ENCODE measurements at regions of chr12 and their contacts with region 1.

Region 1: DNA sequence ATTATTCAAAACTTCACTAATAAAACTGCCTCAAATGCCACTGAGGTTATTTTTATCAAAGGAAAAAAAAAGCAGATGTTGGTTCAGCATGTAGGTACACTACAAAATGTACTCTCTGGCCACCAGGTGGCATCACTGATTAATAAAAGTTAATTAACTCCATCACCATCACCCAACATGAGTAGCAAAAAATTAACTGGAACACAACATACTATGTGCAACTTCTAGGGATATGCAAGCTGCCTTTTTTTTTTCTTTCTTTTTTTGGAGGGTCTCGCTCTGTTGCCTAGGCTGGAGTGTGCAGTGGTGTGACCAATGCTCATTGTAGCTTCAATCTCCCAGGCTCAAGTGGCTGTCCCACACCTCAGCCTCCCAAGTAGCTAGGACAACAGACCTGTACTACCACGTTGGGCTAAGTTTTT is 43.8 kb upstream of the NR2C1 start:
- DNase-seq: peak; percentile 86
- H3K4me3 Mint-ChIP-seq: peak overlapping the region; percentile 38
- H3K27ac Mint-ChIP-seq: peak overlapping the region; percentile 78
- H3K4me1 Mint-ChIP-seq: peaks cover 28% of the 10 kb centered on the region
- H3K27me3 Mint-ChIP-seq: no peaks in the 10 kb centered on the region
- CTCF ChIP-seq: peak; percentile 48

Region 2: DNA sequence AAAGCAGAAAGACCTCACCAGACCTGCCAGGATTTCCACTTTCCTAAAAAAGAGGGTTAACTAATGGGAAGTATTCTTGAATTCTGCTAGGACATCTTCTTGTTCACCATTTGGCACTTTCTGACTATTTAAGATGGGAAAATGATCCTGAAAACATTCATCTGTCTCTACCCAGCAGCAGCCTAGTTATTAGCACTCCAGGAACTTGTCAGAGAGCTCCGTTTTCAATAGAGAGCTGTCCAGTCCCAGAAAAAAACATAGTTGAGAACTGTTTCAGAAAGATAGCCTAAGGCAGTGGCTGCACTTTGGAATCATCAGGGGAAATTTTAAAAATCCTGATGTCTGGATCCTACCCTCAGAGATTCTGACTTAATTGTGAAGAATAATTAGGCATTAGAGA is 635.5 kb before region 1 on chr12:
- CTCF ChIA-PET with region 1: no interaction called
- POLR2A ChIA-PET with region 1: no interaction called
- intact Hi-C with region 1: no loop called
- DNase-seq: no peak
- H3K4me3 Mint-ChIP-seq: no peak overlapping the region
- H3K27ac Mint-ChIP-seq: no peak overlapping the region
- H3K4me1 Mint-ChIP-seq: no peaks in the 10 kb centered on the region
- H3K27me3 Mint-ChIP-seq: no peaks in the 10 kb centered on the region
- CTCF ChIP-seq: no peak

Region 3: GRCh38 chr12:94676031-94676641 is 441.1 kb before region 1 on chr12:
- CTCF ChIA-PET with region 1: no interaction called
- POLR2A ChIA-PET with region 1: no interaction called
- intact Hi-C with region 1: no loop called
- DNase-seq: no peak
- H3K4me3 Mint-ChIP-seq: no peak overlapping the region
- H3K27ac Mint-ChIP-seq: no peak overlapping the region
- H3K4me1 Mint-ChIP-seq: no peaks in the 10 kb centered on the region
- H3K27me3 Mint-ChIP-seq: peaks cover 7% of the 10 kb centered on the region
- CTCF ChIP-seq: no peak

Region 4: DNA sequence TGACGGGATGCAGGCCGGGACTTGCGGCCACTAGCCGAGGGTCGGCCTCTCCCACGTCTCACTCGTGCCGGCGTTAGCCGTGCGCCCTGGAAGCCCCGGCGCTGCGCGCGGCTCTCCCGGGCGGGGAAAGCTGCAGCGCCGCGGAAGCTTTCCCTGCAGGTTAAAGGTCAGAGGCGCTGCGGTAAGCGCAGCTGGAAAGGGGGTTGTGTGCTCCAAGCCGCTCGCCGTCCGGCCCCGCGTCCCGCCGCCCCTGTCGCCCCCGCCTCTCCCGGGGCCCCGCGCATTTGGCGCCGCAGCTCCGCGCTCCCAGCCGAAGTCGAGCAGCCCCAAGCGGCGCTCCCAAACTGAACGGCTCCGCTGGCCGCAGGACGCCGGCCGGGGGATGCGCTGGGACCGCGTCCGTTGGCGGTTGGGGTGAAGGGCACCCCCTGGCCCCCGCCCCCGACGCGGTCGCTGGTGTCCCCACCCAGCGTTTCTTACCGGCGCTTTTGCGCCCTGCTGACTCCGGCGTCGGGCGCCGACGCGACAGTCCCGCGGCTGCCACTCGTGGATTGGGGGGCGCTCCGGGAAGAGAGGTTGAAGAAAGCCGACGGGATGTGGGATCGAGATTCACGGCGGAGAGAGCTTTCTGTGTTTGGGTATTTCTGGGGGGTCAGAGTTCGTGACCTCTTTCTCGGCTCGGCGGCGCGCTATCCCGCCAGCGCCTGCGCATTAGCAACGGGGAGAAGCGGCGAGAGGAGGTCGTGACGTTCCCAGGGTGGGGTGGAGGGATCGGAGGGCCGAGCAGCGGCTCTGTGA is 44.1 kb before region 1 on chr12 and contains the start of gene NR2C1:
- CTCF ChIA-PET with region 1: interaction called, 3 read pairs
- POLR2A ChIA-PET with region 1: interaction called, 10 read pairs
- intact Hi-C with region 1: no loop called
- DNase-seq: peak; percentile 92
- H3K4me3 Mint-ChIP-seq: peak within 1 kb of the TSS; percentile 88
- H3K27ac Mint-ChIP-seq: peak within 1 kb of the TSS; percentile 59
- H3K4me1 Mint-ChIP-seq: peaks cover 4% of the 10 kb centered on the region
- H3K27me3 Mint-ChIP-seq: no peaks in the 10 kb centered on the region
- CTCF ChIP-seq: no peak
- total RNA-seq, gene NR2C1: 29.0 and 35.2 TPM in 2 replicates

Region 5: GRCh38 chr12:95131585-95132340 is 14.6 kb after region 1 on chr12:
- CTCF ChIA-PET with region 1: interaction called, 11 read pairs
- POLR2A ChIA-PET with region 1: interaction called, 3 read pairs
- intact Hi-C with region 1: no loop called
- DNase-seq: no peak
- H3K4me3 Mint-ChIP-seq: no peak overlapping the region
- H3K27ac Mint-ChIP-seq: no peak overlapping the region
- H3K4me1 Mint-ChIP-seq: no peaks in the 10 kb centered on the region
- H3K27me3 Mint-ChIP-seq: no peaks in the 10 kb centered on the region
- CTCF ChIP-seq: no peak

Region 6: DNA sequence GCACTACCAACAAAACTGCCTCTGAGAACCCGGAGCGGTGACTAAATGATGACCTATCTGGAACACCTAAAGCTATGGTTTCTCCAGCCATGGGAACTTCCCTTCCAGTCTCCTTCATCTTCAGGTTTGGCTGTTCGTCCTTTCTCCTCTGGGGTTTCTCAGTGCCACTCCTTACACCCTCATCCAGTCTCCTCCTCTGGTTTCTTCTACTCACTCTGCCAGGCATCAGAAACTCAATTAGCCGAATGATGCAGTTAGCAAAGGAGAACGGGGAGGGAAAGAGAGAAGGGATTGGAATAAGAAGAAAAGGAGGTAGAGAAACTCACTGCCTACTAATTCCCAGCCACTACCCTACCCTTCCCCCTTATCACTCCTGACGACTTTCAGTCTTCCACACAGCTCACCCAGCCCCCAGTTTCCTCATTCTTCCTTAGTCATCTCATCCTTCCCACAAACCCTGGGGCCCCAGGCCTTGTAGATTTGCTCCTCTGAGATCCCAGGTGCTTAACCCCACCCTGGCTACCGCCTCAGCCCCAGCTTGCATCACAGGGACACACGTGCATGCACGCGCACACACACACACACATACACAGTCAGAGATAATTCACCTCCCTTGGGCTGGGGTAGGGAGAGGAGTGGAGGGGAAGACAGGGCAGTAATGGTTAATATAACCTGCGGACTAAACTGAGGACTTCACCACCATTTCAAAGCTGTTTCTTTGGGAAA is 87.1 kb after region 1 on chr12:
- CTCF ChIA-PET with region 1: interaction called, 8 read pairs
- POLR2A ChIA-PET with region 1: interaction called, 44 read pairs
- intact Hi-C with region 1: loop called (anchors 5 kb)
- DNase-seq: peak; percentile 100
- H3K4me3 Mint-ChIP-seq: peak overlapping the region; percentile 77
- H3K27ac Mint-ChIP-seq: peak overlapping the region; percentile 98
- H3K4me1 Mint-ChIP-seq: peaks cover 45% of the 10 kb centered on the region
- H3K27me3 Mint-ChIP-seq: no peaks in the 10 kb centered on the region
- CTCF ChIP-seq: no peak

Region 7: GRCh38 chr12:95318071-95318545 is 200.9 kb after region 1 on chr12:
- CTCF ChIA-PET with region 1: no interaction called
- POLR2A ChIA-PET with region 1: no interaction called
- intact Hi-C with region 1: loop called (anchors 5 kb)
- DNase-seq: peak; percentile 58
- H3K4me3 Mint-ChIP-seq: no peak overlapping the region
- H3K27ac Mint-ChIP-seq: peak overlapping the region; percentile 69
- H3K4me1 Mint-ChIP-seq: peaks cover 9% of the 10 kb centered on the region
- H3K27me3 Mint-ChIP-seq: no peaks in the 10 kb centered on the region
- CTCF ChIP-seq: no peak

Region 8: DNA sequence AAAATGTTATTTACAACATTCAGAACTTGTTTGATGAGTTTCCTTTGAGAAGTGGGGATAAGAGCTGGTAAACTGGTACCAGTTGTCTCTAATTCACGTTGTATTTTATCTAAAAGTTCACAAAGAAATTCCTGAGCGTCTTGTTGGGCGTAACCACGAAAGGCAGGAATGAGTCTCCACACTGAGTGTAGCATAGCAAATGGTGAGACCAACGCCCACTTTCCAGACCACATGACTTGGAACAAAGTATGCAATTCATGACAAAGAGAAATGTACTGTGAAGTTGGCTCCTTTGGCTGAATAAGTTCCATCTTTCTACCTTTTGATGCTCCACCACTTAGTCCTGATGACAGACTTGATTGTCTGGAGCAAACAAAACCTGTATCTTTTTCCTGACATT is 415.7 kb after region 1 on chr12:
- CTCF ChIA-PET with region 1: interaction called, 7 read pairs
- POLR2A ChIA-PET with region 1: interaction called, 7 read pairs
- intact Hi-C with region 1: loop called (anchors 1 kb)
- DNase-seq: no peak
- H3K4me3 Mint-ChIP-seq: no peak overlapping the region
- H3K27ac Mint-ChIP-seq: no peak overlapping the region
- H3K4me1 Mint-ChIP-seq: peaks cover 18% of the 10 kb centered on the region
- H3K27me3 Mint-ChIP-seq: no peaks in the 10 kb centered on the region
- CTCF ChIP-seq: no peak

Measured in MCF 10A (cell line).